K562 (cell line): ENCODE measurements at regions of chr9 and their contacts with region 1.

Region 1: DNA sequence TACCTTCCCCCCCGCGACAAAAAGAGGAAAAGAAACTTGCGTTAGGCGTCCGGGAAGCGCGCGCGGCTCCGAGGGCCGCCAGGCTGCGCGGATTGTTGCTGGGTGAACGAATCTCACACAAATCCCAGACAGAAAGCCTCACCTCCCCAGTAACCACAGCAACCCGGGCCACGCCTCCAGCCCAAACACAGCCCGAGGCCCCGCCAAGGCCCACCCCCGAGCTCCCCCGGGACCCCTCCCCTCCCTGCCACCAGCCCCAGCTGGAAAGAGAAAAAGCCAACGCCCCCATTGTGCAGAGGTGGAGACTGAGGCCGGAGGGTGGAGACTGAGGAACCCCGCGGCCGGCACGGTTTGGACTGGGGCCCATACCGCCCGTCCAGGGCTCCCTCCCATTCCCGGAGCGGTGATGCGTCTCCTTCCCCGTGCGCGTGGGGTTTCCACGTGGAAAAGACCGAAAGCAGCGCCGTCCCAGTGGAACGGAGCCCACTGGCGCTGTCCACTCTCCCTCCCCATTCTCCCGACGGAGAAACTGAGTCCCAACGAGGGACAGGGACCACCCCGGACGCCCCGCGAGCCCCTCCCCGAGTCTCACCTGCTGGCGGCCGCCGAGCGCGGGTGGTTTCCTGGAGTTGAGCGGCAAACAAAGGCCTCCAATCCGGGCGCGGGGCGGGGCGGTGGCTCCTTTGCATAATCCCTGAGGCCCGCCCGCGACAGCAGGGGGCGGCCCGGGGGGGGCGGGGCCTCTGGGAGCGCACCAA is 10.2 kb upstream of the AKNA start:
- DNase-seq: peak; percentile 96 to 99 (median 99)
- ATAC-seq: peak; percentile 93
- H3K4me3 ChIP-seq: peak overlapping the region; percentile 75
- H3K27ac ChIP-seq: peak overlapping the region; percentile 70; the same call in 2 of the 3 replicates
- H3K4me1 ChIP-seq: peaks cover 20 to 21% of the 10 kb centered on the region in 2 experiments
- H3K27me3 ChIP-seq: no peaks in the 10 kb centered on the region
- CTCF ChIP-seq: no peak
- EP300 ChIP-seq: no peak
- POLR2A ChIP-seq: peak; percentile 61
- RAD21 ChIP-seq: no peak

Region 2: DNA sequence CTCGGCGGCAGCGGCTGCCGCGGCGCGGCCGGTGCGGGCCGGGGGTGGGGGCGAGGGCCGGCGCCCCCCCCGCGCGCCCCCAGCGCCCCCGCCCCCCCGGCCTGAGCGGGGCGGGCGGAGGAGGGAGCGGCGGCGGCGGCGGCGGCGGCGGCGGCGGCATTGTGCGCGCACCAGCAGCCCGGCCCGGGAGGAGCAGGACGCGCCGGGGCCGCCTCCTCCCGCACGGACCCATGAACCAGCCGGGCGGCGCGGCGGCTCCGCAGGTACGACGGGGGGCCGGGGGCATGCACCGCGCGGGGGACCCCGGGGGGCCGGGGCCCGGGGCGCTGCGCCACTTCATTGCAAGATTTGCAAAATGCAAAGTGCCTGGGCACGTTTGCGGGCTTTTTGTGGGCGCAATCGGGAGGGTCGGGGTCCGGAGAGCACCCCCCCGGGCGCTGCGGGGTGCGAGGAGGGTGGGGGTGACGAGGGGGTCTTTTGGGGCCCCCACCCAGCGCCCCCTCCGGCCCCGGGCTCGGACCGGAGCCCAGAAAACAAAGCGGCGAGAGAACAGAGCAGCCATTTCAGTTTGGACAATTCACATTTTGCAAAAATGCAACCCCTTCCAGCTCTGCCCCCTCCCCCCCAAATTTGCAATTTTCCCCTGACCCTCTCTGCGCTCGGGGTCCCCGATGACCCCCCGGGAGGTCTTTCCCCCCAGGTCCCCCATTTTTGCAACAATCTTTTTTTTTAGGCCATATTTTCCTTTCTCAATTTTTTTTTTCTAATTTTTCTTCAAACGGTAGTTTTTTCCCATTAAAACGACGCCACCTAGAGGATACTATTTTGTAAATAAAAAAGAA is 521.7 kb before region 1 on chr9 and contains the start of gene ZNF618:
- CTCF ChIA-PET with region 1: no interaction called
- POLR2A ChIA-PET with region 1: no interaction called
- in situ Hi-C with region 1: no loop called
- intact Hi-C with region 1: loop called (anchors 5 kb)
- DNase-seq: peak; percentile 32 to 72 (median 66)
- ATAC-seq: peak; percentile 70
- H3K4me3 ChIP-seq: peak within 1 kb of the TSS; percentile 87
- H3K27ac ChIP-seq: peak within 1 kb of the TSS; percentile 66
- H3K4me1 ChIP-seq: peaks cover 0 to 14% of the 10 kb centered on the region in 2 experiments; a peak in 2 of 5 replicates
- H3K27me3 ChIP-seq: no peaks in the 10 kb centered on the region; a peak in 3 of 5 replicates
- CTCF ChIP-seq: peak; percentile 3 to 48 (median 32); a peak in 3 of 6 replicates
- EP300 ChIP-seq: no peak
- POLR2A ChIP-seq: no peak
- RAD21 ChIP-seq: no peak
- polyA plus RNA-seq, gene ZNF618: 0.22 to 0.32 TPM

Region 3: DNA sequence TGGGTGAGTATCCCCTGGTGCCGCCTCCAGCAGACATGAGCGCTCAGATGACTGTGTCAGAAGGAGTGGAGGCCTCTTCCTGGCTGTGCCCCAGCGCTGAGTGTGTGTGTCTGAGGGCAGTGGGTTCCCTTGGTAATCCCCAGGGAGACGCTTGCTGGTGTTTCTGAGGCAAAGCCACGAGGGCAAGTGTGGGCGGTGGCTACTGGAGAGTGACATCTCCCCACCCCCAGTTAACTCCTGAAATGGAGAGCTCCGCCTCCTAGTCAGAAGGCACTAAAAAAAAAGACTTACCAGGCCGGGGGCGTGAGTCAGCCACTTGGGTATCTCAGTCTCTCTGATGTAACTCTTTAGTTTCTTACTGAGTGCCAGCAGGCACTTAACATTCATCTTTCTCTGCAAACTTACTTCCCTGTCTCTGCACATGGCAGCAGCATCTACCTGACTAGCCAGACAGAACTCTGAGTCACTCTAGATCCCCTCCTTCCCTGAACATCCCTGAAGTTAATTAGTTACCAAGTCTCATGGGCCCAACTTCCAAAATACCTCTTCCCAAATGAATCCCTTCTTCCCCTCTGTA is 49.0 kb before region 1 on chr9:
- CTCF ChIA-PET with region 1: no interaction called
- POLR2A ChIA-PET with region 1: interaction called, 4 read pairs
- in situ Hi-C with region 1: no loop called
- intact Hi-C with region 1: loop called (anchors 1 kb)
- DNase-seq: peak; percentile 85 to 90 (median 87)
- ATAC-seq: peak; percentile 94
- H3K4me3 ChIP-seq: no peak overlapping the region
- H3K27ac ChIP-seq: peak overlapping the region; percentile 33; the same call in 2 of the 3 replicates
- H3K4me1 ChIP-seq: peaks cover 13 to 14% of the 10 kb centered on the region in 2 experiments; a peak in 4 of 5 replicates
- H3K27me3 ChIP-seq: no peaks in the 10 kb centered on the region
- CTCF ChIP-seq: no peak
- EP300 ChIP-seq: no peak
- POLR2A ChIP-seq: no peak
- RAD21 ChIP-seq: no peak

Region 4: DNA sequence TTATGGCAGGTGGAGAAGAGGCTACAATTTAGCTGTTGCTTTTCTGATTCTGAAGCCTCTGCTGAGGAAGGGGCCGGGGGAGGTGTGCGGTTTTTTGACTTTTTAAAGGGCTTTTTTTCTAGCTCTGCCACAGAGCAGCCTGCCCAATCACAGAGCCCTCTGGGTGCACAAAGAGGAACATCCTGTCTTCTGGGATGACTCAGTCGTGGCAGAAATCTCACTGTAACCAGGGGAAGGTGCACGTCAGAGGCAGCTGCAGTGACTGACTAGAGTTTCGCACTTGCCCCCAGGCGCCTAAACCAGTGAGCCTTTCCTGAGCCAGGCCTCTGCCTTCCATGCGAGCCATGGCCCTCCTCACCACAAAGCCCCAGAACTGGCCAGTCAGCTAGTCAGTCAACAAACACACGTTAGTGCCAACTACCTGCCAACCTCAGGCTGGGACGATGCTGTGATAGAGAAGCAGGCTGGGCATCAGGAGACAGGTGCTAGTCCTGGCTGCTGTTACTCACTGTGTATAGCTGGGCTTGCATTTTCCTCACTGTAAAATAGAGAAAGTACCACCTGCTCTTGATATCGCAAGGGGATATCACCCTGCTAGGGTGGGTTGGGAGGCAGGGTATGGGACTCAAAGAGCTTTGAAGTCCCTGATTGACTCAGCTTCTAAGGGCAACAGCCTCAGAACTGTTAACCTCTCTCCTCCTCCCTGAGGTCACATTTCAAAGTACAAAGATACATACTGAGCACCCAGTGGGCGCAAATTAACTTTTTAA is 12.4 kb before region 1 on chr9:
- CTCF ChIA-PET with region 1: no interaction called
- POLR2A ChIA-PET with region 1: interaction called, 30 read pairs
- in situ Hi-C with region 1: no loop called
- intact Hi-C with region 1: no loop called
- DNase-seq: no peak
- ATAC-seq: no peak
- H3K4me3 ChIP-seq: no peak overlapping the region
- H3K27ac ChIP-seq: no peak overlapping the region
- H3K4me1 ChIP-seq: peaks cover 0 to 9% of the 10 kb centered on the region in 2 experiments; a peak in 2 of 5 replicates
- H3K27me3 ChIP-seq: no peaks in the 10 kb centered on the region
- CTCF ChIP-seq: no peak
- EP300 ChIP-seq: no peak
- POLR2A ChIP-seq: no peak
- RAD21 ChIP-seq: no peak